Panc1 (cell line): ENCODE measurements at regions of chr2 and their contacts with region 1.

Region 1: GRCh38 chr2:74226648-74227213 is 28.3 kb downstream of the MTHFD2 start:
- DNase-seq: no peak
- ATAC-seq: no peak
- H3K4me3 ChIP-seq: no peak overlapping the region
- H3K27ac ChIP-seq: no peak overlapping the region
- H3K4me1 ChIP-seq: peaks cover 9% of the 10 kb centered on the region; the same call in 1 of the 2 replicates
- H3K27me3 ChIP-seq: no peaks in the 10 kb centered on the region
- CTCF ChIP-seq: no peak

Region 2: DNA sequence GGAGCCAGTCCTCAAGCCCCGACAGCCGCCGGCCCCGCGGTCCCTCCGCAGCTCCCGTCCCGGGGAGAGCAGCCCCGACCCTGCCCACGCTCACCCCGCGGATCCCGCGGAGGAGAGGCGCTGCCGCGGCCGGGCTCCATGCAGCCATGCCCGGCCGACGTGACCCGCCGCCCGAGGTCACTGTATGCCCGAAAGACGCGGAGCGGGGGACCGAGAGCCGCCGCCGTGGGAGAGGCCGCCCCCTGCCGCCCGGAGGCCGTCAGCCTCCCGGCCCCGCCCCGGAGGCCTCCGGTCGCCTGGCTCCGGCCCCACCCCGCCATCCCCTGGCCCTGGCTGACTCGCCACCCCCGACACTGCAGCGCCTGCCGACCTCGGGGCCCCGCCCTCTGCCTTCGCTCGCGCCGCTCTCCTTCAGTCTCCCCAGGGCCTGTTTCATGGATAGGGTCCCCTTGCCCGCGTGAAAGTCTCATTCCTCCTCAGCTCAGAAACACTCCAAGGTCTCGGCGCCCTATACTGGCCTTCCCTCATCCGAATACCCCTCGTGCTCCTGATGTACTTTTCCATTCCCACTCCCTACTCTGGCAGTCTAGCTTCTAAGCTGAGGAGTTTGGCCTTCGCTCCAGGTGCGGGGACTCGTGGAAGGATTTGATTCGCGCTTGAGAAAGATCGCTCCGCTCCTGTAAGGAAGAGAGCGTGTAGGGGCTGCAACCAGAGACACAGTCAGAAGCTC is 78.8 kb before region 1 on chr2 and contains the start of gene BOLA3:
- CTCF ChIA-PET with region 1: no interaction called
- POLR2A ChIA-PET with region 1: no interaction called
- in situ Hi-C with region 1: no loop called
- intact Hi-C with region 1: no loop called
- DNase-seq: peak; percentile 20
- ATAC-seq: peak; percentile 97
- H3K4me3 ChIP-seq: peak within 1 kb of the TSS; percentile 82 to 88
- H3K27ac ChIP-seq: peak within 1 kb of the TSS; percentile 89
- H3K4me1 ChIP-seq: peaks cover 10% of the 10 kb centered on the region; the same call in 1 of the 2 replicates
- H3K27me3 ChIP-seq: no peaks in the 10 kb centered on the region
- CTCF ChIP-seq: peak; percentile 97
- total RNA-seq, gene BOLA3: 69.7 TPM

Region 3: GRCh38 chr2:74313497-74313896 is 86.8 kb after region 1 on chr2:
- CTCF ChIA-PET with region 1: no interaction called
- POLR2A ChIA-PET with region 1: interaction called, 15 read pairs
- in situ Hi-C with region 1: no loop called
- intact Hi-C with region 1: no loop called
- DNase-seq: no peak
- ATAC-seq: no peak
- H3K4me3 ChIP-seq: no peak overlapping the region
- H3K27ac ChIP-seq: no peak overlapping the region
- H3K4me1 ChIP-seq: no peaks in the 10 kb centered on the region
- H3K27me3 ChIP-seq: no peaks in the 10 kb centered on the region; the same call in none of the 2 replicates
- CTCF ChIP-seq: no peak; the same call in 1 of the 2 replicates